HepG2 (cell line): ENCODE measurements at regions of chr13 and their contacts with region 1.

Region 1: DNA sequence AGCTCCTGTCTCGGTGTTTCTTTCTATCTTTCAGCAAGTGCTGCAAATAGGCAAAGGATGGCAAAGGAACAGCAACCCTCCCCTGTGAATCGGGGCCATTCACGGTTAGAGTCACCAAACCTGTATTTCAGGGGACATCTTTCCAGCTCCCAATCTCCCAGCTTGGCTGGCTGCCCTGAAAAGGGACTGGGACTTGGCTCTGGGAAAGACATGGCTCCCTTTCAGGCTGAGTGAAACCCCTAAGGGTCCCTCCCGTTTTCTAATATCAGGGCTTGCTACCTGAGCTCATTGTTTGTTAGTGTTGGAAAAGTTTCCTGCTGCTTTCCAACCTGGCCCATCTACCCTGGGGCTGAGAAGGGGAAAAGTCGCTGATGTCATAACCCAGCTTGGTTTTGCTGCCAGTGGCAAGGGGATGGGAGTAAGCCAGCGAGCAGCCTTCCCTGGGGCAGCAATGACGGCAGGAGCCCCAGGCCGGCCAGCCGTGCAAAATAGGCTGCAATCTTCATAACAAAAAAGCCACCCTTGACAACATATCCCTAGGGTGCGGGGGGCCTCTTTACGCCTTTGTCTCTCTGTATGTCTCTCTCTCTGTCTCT is 29.9 kb downstream of the SERP2 start:
- DNase-seq: no peak
- ATAC-seq: 0 out of 3 replicates have a peak, but pooled peaks have one; percentile 1
- H3K4me3 ChIP-seq: 0 out of 6 replicates have a peak overlapping the region, but pooled peaks of 1 of the 3 experiments have one; percentile 30
- H3K27ac ChIP-seq: peak overlapping the region; percentile 97
- H3K4me1 ChIP-seq: peaks cover 38% of the 10 kb centered on the region
- H3K27me3 ChIP-seq: no peaks in the 10 kb centered on the region; a peak in 1 of 5 replicates
- CTCF ChIP-seq: no peak
- EP300 ChIP-seq: no peak
- POLR2A ChIP-seq: no peak
- RAD21 ChIP-seq: no peak

Region 2: GRCh38 chr13:44058624-44059215 is 344.8 kb before region 1 on chr13:
- CTCF ChIA-PET with region 1: no interaction called
- POLR2A ChIA-PET with region 1: no interaction called
- in situ Hi-C with region 1: no loop called
- intact Hi-C with region 1: no loop called
- DNase-seq: no peak
- ATAC-seq: no peak
- H3K4me3 ChIP-seq: no peak overlapping the region
- H3K27ac ChIP-seq: no peak overlapping the region
- H3K4me1 ChIP-seq: no peaks in the 10 kb centered on the region
- H3K27me3 ChIP-seq: no peaks in the 10 kb centered on the region
- CTCF ChIP-seq: no peak
- EP300 ChIP-seq: no peak
- POLR2A ChIP-seq: no peak
- RAD21 ChIP-seq: no peak

Region 3: GRCh38 chr13:44364348-44365049 is 39.1 kb before region 1 on chr13:
- CTCF ChIA-PET with region 1: no interaction called
- POLR2A ChIA-PET with region 1: interaction called, 3 read pairs
- in situ Hi-C with region 1: no loop called
- intact Hi-C with region 1: loop called (anchors 5 kb)
- DNase-seq: peak; percentile 82
- ATAC-seq: peak; percentile 95
- H3K4me3 ChIP-seq: peak overlapping the region in 1 of 3 experiments; percentile 19; a peak in 1 of 6 replicates
- H3K27ac ChIP-seq: peak overlapping the region; percentile 1
- H3K4me1 ChIP-seq: peaks cover 59% of the 10 kb centered on the region
- H3K27me3 ChIP-seq: no peaks in the 10 kb centered on the region
- CTCF ChIP-seq: no peak
- EP300 ChIP-seq: peak in 1 of 2 experiments; percentile 65; a peak in 2 of 4 replicates
- POLR2A ChIP-seq: no peak
- RAD21 ChIP-seq: no peak

Region 4: DNA sequence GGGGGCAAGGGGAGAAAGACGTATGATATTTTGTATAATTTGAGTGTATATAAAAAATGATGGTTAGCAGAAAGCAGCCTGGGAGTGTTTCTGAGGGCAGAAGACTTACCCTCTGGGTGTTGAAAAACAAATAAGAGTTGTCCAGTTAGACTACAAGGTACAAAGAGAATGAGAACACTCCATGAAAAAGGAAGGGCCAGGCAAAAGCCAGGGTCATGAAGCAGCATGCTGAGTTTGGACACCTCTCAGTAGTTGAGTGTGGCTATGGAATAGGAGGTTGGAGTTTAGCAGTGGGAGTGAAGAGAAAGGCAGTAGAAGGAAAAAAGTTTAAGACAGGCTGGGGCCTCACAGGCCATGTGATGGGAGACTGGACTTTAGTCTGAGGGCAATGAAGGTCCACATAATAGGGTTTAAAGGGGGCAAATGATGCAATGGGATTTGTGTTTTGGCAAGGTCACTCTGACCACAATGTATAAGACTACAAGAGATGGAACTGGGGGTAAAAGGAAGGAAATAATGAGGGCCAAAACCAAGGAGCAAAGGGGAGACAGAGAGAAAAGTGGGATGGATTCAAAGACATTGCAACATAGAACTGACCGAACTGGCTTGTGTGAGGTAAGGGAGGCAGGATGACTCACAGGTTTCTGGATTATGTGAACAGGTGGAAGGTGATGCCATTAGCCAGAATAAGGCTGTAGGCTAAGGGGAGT is 46.6 kb after region 1 on chr13:
- CTCF ChIA-PET with region 1: no interaction called
- POLR2A ChIA-PET with region 1: interaction called, 17 read pairs
- in situ Hi-C with region 1: no loop called
- intact Hi-C with region 1: no loop called
- DNase-seq: peak; percentile 42
- ATAC-seq: peak; percentile 75
- H3K4me3 ChIP-seq: no peak overlapping the region
- H3K27ac ChIP-seq: peak overlapping the region; percentile 76
- H3K4me1 ChIP-seq: peaks cover 40% of the 10 kb centered on the region
- H3K27me3 ChIP-seq: no peaks in the 10 kb centered on the region
- CTCF ChIP-seq: no peak
- EP300 ChIP-seq: peak in 1 of 2 experiments; percentile 56; a peak in 2 of 4 replicates
- POLR2A ChIP-seq: no peak
- RAD21 ChIP-seq: no peak

Region 5: GRCh38 chr13:44605275-44605674 is 201.7 kb after region 1 on chr13:
- CTCF ChIA-PET with region 1: no interaction called
- POLR2A ChIA-PET with region 1: no interaction called
- in situ Hi-C with region 1: no loop called
- intact Hi-C with region 1: no loop called
- DNase-seq: no peak
- ATAC-seq: no peak
- H3K4me3 ChIP-seq: no peak overlapping the region
- H3K27ac ChIP-seq: no peak overlapping the region
- H3K4me1 ChIP-seq: no peaks in the 10 kb centered on the region
- H3K27me3 ChIP-seq: no peaks in the 10 kb centered on the region
- CTCF ChIP-seq: no peak
- EP300 ChIP-seq: no peak
- POLR2A ChIP-seq: no peak
- RAD21 ChIP-seq: no peak